ENCODE measurements at regions of chr4 and their contacts with region 1.

Region 1: GRCh38 chr4:95165926-95166524 is 382.7 kb downstream of the UNC5C start:
- DNase-seq: peak; percentile 65
- ATAC-seq: peak; percentile 85
- H3K4me3 ChIP-seq: no peak overlapping the region
- H3K27ac ChIP-seq: no peak overlapping the region
- H3K4me1 ChIP-seq: no peaks in the 10 kb centered on the region
- H3K27me3 ChIP-seq: no peaks in the 10 kb centered on the region
- CTCF ChIP-seq: peak; percentile 70
- POLR2A ChIP-seq: no peak
- RAD21 ChIP-seq: peak; percentile 81

Region 2: GRCh38 chr4:95510145-95510544 is 344.1 kb after region 1 on chr4:
- CTCF ChIA-PET with region 1: no interaction called
- POLR2A ChIA-PET with region 1: no interaction called
- dilution Hi-C with region 1: no loop called
- in situ Hi-C with region 1: no loop called
- intact Hi-C with region 1: loop called (anchors 10 kb)
- DNase-seq: peak; percentile 13
- ATAC-seq: peak; percentile 64
- H3K4me3 ChIP-seq: no peak overlapping the region
- H3K27ac ChIP-seq: no peak overlapping the region
- H3K4me1 ChIP-seq: no peaks in the 10 kb centered on the region; the same call in 1 of the 2 replicates
- H3K27me3 ChIP-seq: no peaks in the 10 kb centered on the region
- CTCF ChIP-seq: peak; percentile 50
- POLR2A ChIP-seq: no peak
- RAD21 ChIP-seq: peak; percentile 38

Region 3: GRCh38 chr4:95549246-95550114 is 383.5 kb after region 1 on chr4:
- CTCF ChIA-PET with region 1: no interaction called
- POLR2A ChIA-PET with region 1: no interaction called
- dilution Hi-C with region 1: no loop called
- in situ Hi-C with region 1: no loop called
- intact Hi-C with region 1: loop called (anchors 2 kb)
- DNase-seq: peak; percentile 19
- ATAC-seq: peak; percentile 61
- H3K4me3 ChIP-seq: peak overlapping the region; percentile 61
- H3K27ac ChIP-seq: no peak overlapping the region
- H3K4me1 ChIP-seq: no peaks in the 10 kb centered on the region
- H3K27me3 ChIP-seq: peaks cover 38% of the 10 kb centered on the region
- CTCF ChIP-seq: no peak
- POLR2A ChIP-seq: no peak
- RAD21 ChIP-seq: no peak

Region 4: GRCh38 chr4:96035727-96036126 is 869.7 kb after region 1 on chr4:
- CTCF ChIA-PET with region 1: no interaction called
- POLR2A ChIA-PET with region 1: no interaction called
- dilution Hi-C with region 1: no loop called
- in situ Hi-C with region 1: no loop called
- intact Hi-C with region 1: loop called (anchors 10 kb)
- DNase-seq: no peak
- ATAC-seq: no peak
- H3K4me3 ChIP-seq: no peak overlapping the region
- H3K27ac ChIP-seq: no peak overlapping the region
- H3K4me1 ChIP-seq: no peaks in the 10 kb centered on the region
- H3K27me3 ChIP-seq: no peaks in the 10 kb centered on the region
- CTCF ChIP-seq: no peak
- POLR2A ChIP-seq: no peak
- RAD21 ChIP-seq: no peak

Measured in IMR-90 (cell line).